Left cardiac atrium (tissue), 4 donors: ENCODE measurements at regions of chr11 and their contacts with region 1.

Region 1: DNA sequence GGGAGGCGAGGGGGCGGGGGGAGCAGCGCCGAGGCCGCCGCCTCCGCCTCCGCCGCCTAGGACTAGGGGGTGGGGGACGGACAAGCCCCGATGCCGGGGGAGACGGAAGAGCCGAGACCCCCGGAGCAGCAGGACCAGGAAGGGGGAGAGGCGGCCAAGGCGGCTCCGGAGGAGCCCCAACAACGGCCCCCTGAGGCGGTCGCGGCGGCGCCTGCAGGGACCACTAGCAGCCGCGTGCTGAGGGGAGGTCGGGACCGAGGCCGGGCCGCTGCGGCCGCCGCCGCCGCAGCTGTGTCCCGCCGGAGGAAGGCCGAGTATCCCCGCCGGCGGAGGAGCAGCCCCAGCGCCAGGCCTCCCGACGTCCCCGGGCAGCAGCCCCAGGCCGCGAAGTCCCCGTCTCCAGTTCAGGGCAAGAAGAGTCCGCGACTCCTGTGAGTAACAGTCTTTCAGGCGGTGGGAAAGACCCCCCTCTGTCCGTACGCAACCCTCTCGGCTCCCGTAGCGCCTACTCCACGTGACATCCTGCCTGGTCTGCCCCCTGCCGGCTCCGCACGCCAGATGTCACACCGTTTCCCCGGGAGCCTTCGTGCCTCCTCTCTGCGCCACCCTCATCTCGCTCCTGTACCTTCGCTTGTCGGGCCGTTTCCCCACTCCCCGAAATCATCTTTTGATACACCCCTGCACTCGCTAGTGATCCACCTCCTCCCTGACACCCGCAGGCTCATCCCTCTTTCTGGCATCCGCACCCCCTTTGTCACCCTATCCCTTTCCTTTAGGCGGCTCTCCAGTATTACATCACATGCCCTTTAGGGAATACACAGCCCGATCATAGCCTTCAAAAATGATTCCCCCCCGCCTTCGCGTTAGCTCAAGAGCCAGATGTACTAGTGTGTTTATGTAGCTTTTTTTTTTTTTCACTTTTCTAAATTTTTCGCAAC is 598 bp downstream of the ZFP91 start:
- DNase-seq: peak; percentile 93
- ATAC-seq: peak; percentile 71 to 73

Region 2: DNA sequence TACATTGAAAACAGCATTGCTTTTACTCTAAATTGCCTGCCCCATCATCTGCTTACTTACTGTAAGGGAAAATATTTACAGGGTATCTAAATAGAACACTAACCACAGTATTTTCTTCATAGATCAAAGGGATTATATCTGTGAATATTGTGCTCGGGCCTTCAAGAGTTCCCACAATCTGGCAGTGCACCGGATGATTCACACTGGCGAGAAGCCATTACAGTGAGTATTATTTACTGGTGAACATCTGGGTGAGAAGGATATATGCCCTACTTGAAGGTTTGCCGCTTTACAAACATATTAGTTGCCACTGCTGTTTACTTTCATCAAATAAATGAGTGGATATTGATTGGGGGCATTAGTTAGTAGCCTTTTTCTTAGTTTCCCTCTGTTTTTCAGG is 37.1 kb after region 1 on chr11:
- intact Hi-C with region 1: loop called (anchors 5 to 10 kb)
- DNase-seq: peak; percentile 41
- ATAC-seq: peak; percentile 67 to 95

Region 3: GRCh38 chr11:58629857-58630256 is 50.4 kb after region 1 on chr11:
- intact Hi-C with region 1: loop called in 1 of 2 experiments (anchors 10 kb)
- DNase-seq: no peak
- ATAC-seq: peak; percentile 27 to 38

Region 4: DNA sequence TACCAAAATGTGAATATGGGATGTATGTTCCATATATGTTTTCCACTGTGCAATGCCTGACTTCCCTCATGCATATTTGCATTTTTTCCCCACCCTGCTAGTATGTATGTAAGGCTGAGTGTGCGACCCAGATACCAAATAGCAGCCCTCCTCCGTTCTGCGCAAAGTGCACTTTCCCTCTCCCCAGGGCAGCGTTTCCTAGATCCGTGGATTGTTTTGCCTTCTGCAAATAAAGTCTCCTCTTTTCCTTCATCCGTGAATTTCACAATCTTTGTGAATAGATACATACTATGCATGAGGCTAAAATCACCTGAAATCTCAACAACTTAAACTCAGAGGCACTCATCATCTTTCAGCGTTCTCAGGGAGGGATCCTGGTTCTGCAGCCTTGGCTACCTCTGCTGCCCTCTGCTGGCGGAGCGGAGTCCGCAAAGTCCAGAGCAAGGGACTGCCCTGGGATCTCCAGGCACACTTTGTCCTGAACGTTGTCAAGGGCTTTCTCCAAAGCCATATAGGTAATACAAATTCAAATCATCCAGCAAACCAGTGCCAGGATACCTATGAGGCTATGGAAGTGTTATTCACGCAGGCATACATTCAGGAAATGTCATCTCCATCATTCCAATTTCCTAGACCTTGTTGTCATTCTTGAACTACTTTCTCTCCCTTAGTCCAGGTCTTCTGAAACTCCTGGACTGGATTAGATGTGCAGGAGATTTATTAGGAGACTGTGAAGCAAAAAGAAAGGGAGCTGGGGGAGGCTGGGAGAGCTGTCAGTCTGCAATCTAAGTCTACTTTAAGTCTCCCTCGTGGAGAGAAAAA is 96.1 kb after region 1 on chr11:
- intact Hi-C with region 1: loop called in 1 of 2 experiments (anchors 5 kb)
- DNase-seq: peak; percentile 80
- ATAC-seq: peak; percentile 88 to 92

Region 5: GRCh38 chr11:58685973-58686722 is 106.7 kb after region 1 on chr11:
- intact Hi-C with region 1: no loop called
- DNase-seq: no peak
- ATAC-seq: no peak

Region 6: DNA sequence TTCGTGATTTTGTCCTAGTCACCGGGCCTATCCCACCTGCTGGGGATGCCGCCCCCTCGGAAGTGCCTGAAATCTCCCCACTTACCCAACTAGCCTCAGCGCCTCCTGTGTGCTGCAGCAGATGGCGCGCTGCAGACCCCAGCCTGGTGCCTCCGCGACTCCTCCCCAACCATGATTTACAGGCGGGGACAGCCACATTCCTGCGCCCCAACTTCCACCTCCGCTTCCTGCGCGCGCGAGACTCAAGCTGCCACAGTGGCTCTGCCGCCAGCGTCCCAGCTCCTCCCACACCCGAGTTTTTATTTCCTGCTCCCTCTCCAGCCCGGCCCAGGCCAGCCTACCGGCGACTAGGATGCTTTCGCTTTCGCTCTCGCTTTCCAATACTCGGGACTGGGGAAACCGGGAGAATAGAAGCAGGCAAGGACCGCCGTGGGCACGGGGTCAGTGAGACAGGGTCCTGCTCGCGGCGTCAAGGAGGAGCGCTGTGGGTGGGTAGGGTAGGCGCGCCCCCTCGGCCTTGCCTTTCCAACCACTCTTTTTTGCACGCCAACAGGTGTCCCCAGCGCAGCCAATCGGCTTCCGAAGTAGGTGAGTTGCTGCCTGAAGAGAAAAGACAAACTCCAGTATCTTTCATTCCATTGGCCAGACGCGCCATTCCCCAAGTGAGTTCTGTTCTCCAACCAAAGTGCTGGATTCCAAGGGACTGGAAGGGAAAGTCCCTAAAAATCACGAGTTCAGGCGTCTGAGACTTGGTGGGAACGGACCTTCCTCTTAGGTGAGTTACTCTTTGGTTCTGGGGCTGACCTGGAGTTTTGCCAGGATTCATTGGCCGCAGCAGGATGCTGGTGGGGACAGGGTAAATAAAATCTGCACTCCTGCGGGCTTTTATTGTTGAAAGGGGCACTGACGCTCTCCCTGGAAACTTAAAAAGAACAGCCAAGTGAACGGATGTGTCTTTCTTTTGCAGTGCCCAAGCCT is 563.4 kb after region 1 on chr11 and contains the start of gene FAM111A:
- intact Hi-C with region 1: loop called in 1 of 2 experiments (anchors 10 kb)
- DNase-seq: peak; percentile 90
- ATAC-seq: peak; percentile 94 to 95
- total RNA-seq, gene FAM111A: 7.8 to 14.6 TPM